Posterior vena cava (tissue), 2 donors: ENCODE measurements at regions of chr10 and their contacts with region 1.

Region 1: GRCh38 chr10:124875596-124875995 is 66.3 kb upstream of the ZRANB1 start:
- DNase-seq: peak; percentile 31

Region 2: DNA sequence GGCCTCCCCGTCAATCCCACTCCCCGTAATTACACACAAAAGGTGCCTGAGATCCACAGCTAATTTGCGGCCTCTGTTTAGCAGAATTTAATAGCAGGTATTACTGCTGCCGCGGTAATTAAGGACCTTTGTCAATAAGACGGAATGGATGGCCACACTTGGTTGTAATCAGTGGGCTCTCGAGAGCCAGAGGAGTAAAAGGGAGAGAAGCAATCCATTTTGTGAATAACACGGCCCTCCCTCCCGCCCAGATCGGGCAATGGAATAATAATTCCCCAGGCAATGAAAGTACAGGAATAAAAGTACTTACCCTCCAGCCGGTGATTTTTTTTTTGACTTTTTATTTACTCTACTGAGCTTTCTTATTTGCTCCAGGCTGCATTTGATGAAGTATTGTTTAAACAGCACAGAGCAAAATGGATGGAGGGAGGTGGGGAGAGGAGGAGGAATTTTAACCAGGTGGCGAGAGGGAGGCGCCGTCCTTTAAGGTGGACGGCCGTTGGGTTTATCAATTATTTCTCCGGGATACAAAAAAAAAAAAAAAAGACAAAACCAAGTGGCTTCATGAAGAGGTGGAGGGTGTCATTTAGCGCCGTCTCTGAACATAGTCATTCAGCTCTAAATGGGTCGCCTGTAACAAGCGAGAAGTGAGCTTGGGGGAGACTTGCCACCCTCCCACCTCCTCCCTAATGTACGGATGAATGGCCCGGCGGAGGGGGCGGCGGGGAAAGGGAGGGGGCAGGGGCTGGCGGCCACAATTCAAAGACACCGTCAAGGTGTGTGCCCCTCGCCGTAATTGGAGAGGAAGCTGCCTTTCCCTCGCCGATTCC is 1601.1 kb before region 1 on chr10:
- intact Hi-C with region 1: no loop called
- DNase-seq: no peak

Region 3: GRCh38 chr10:124763267-124763666 is 112.3 kb before region 1 on chr10:
- intact Hi-C with region 1: no loop called
- DNase-seq: no peak

Region 4: GRCh38 chr10:125048101-125048864 is 172.7 kb after region 1 on chr10:
- intact Hi-C with region 1: no loop called
- DNase-seq: peak; percentile 95

Region 5: DNA sequence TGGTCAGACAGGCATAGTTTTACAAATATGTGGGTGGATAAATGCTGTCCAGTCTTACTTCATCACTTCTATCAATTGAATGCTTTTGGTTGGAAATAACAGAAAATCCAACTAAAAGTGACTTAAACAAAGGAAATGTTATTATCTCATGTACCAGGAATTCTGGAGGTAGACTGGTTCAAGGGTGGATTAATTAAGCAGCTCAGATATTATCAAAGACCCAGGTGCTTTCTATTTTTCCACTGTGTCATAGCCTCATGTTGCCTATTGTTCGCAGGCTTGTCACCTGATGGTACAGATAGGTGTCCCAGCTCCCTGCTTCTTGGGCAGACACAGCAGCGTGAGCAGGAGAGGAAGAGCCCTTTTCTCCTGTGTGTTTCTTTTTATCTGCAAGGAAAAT is 440.9 kb after region 1 on chr10:
- intact Hi-C with region 1: loop called in 1 of 2 experiments (anchors 5 kb)
- DNase-seq: no peak